Endothelial cell of umbilical vein (primary cell): ENCODE measurements at regions of chr16 and their contacts with region 1.

Region 1: DNA sequence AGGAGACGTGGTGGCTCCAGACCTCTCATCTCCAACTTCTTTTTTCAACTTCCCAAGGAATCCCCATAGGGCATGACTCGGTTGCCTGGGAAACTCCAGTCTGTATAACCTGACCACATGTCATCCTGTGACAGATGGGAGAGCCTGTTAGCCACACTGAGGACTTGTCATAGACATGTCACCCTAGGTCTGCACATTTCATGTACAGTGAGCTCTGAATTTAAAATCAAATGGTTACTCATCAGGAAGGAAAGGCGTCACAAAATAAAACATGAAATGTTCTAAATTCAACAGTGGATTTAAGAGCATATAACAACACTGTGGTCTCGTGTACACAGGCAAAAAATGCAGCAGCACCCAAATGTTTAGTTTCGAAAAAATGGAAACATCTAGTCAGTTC is 22.2 kb upstream of the ADAMTS18 start:
- DNase-seq: peak; percentile 93
- H3K4me3 ChIP-seq: peak overlapping the region in 1 of 3 experiments; percentile 60
- H3K27ac ChIP-seq: peak overlapping the region; percentile 95
- H3K4me1 ChIP-seq: peaks cover 19% of the 10 kb centered on the region
- H3K27me3 ChIP-seq: no peaks in the 10 kb centered on the region
- CTCF ChIP-seq: no peak
- POLR2A ChIP-seq: no peak

Region 2: GRCh38 chr16:77574867-77575624 is 118.0 kb after region 1 on chr16:
- CTCF ChIA-PET with region 1: interaction called, 6 read pairs
- POLR2A ChIA-PET with region 1: no interaction called
- dilution Hi-C with region 1: no loop called
- intact Hi-C with region 1: loop called (anchors 2 kb)
- DNase-seq: peak; percentile 98
- H3K4me3 ChIP-seq: no peak overlapping the region
- H3K27ac ChIP-seq: peak overlapping the region; percentile 95
- H3K4me1 ChIP-seq: peaks cover 49% of the 10 kb centered on the region
- H3K27me3 ChIP-seq: no peaks in the 10 kb centered on the region
- CTCF ChIP-seq: no peak
- POLR2A ChIP-seq: peak; percentile 52